ENCODE measurements at regions of chr16 and their contacts with region 1.

Region 1: GRCh38 chr16:67667817-67668494 is 1.3 kb downstream of the C16orf86 start:
- DNase-seq: peak; percentile 95 to 97 (median 97)
- H3K4me3 ChIP-seq: peak overlapping the region in 5 of 7 experiments; percentile 71 to 90 (median 81)
- H3K27ac ChIP-seq: peak overlapping the region in 1 of 2 experiments; percentile 45
- H3K4me1 ChIP-seq: peaks cover 2 to 40% (median 33%) of the 10 kb centered on the region in 4 experiments
- H3K27me3 ChIP-seq: no peaks in the 10 kb centered on the region

Region 2: GRCh38 chr16:67514382-67514828 is 153.6 kb before region 1 on chr16:
- CTCF ChIA-PET with region 1: interaction called, 111 read pairs
- POLR2A ChIA-PET with region 1: no interaction called
- DNase-seq: peak; percentile 89 to 94 (median 91)
- H3K4me3 ChIP-seq: peak overlapping the region in 1 of 7 experiments; percentile 28
- H3K27ac ChIP-seq: no peak overlapping the region
- H3K4me1 ChIP-seq: peaks cover 0 to 43% (median 37%) of the 10 kb centered on the region in 4 experiments
- H3K27me3 ChIP-seq: no peaks in the 10 kb centered on the region

Region 3: GRCh38 chr16:67561824-67562525 is 106.0 kb before region 1 on chr16:
- CTCF ChIA-PET with region 1: interaction called, 13 read pairs
- POLR2A ChIA-PET with region 1: interaction called, 8 read pairs
- DNase-seq: peak; percentile 97 to 99 (median 98)
- H3K4me3 ChIP-seq: peak overlapping the region; percentile 68 to 100 (median 88)
- H3K27ac ChIP-seq: peak overlapping the region; percentile 83 to 96
- H3K4me1 ChIP-seq: peaks cover 15 to 43% (median 35%) of the 10 kb centered on the region in 4 experiments
- H3K27me3 ChIP-seq: no peaks in the 10 kb centered on the region

Region 4: GRCh38 chr16:67613808-67614207 is 54.1 kb before region 1 on chr16:
- CTCF ChIA-PET with region 1: no interaction called
- POLR2A ChIA-PET with region 1: no interaction called
- DNase-seq: peak; percentile 11 to 23 (median 22)
- H3K4me3 ChIP-seq: no peak overlapping the region
- H3K27ac ChIP-seq: no peak overlapping the region
- H3K4me1 ChIP-seq: no peaks in the 10 kb centered on the region
- H3K27me3 ChIP-seq: no peaks in the 10 kb centered on the region

Region 5: GRCh38 chr16:67641779-67642708 is 25.9 kb before region 1 on chr16:
- CTCF ChIA-PET with region 1: interaction called, 73 read pairs
- POLR2A ChIA-PET with region 1: no interaction called
- DNase-seq: no peak
- H3K4me3 ChIP-seq: no peak overlapping the region
- H3K27ac ChIP-seq: no peak overlapping the region
- H3K4me1 ChIP-seq: peaks cover 0 to 22% (median 18%) of the 10 kb centered on the region in 4 experiments
- H3K27me3 ChIP-seq: no peaks in the 10 kb centered on the region

Region 6: GRCh38 chr16:67750466-67750865 is 82.5 kb after region 1 on chr16:
- CTCF ChIA-PET with region 1: no interaction called
- POLR2A ChIA-PET with region 1: no interaction called
- DNase-seq: no peak
- H3K4me3 ChIP-seq: no peak overlapping the region
- H3K27ac ChIP-seq: no peak overlapping the region
- H3K4me1 ChIP-seq: no peaks in the 10 kb centered on the region
- H3K27me3 ChIP-seq: no peaks in the 10 kb centered on the region

Region 7: DNA sequence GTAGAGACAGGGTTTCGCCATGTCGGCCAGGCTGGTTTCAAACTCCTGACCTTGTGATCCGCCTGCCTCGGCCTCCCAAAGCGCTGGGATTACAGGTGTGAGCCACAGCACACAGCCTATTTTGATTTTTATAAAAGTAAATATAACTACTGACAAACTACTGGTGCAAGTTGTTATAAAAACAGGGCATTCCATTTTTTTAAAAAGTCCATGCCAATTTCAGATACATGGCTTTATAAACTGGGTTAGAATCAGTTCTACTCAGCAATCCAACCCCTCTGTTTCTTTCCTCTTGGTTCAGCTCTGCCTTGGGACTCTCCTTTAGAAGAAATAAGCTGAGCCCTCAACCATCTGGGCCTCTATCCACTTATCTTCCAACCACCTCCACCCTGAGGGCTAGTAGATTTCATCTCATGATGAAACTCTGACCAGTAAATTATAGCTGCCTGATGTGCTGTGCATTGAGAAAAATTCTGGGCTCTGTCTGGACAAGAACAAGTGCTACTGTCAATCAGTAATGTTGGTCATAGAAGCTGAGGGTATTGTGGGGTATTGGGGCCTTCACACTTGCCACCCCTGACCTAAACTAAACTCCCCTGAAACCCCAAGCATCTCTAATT is 128.3 kb after region 1 on chr16:
- CTCF ChIA-PET with region 1: no interaction called
- POLR2A ChIA-PET with region 1: no interaction called
- DNase-seq: no peak
- H3K4me3 ChIP-seq: no peak overlapping the region
- H3K27ac ChIP-seq: no peak overlapping the region
- H3K4me1 ChIP-seq: peaks cover 0 to 5% (median 1%) of the 10 kb centered on the region in 4 experiments
- H3K27me3 ChIP-seq: no peaks in the 10 kb centered on the region

Region 8: DNA sequence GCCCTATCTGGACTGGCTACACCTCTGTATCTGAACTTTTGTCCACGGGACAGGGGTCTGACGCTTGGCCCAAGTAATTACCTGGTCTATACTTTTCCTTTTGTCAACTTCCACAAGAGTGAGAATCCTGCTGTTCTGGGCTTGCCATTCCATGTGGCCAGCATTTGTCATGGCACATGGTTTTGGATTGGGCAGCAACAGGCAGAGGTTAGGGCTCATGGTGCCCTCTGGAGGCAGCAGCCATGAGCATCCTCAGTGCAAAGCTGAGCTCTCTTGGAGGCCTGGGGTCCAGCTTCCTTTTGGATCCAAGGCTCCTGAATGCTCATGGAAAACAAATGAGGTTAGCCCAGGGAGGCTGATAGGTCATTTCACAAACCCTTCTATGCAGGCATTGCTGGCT is 197.4 kb after region 1 on chr16:
- CTCF ChIA-PET with region 1: interaction called, 24 read pairs
- POLR2A ChIA-PET with region 1: interaction called, 3 read pairs
- DNase-seq: peak; percentile 47 to 73 (median 69)
- H3K4me3 ChIP-seq: no peak overlapping the region
- H3K27ac ChIP-seq: no peak overlapping the region
- H3K4me1 ChIP-seq: no peaks in the 10 kb centered on the region
- H3K27me3 ChIP-seq: no peaks in the 10 kb centered on the region

Measured in common myeloid progenitor, CD34-positive (primary cell).